Dendritic cell treated with granulocyte-macrophage colony-stimulating factor and Interleukin-4, amounts not matched to agents 40 ng/mL and 50 ng/mL, for 4 days (primary cell): ENCODE measurements at regions of chr4 and their contacts with region 1.

Region 1: DNA sequence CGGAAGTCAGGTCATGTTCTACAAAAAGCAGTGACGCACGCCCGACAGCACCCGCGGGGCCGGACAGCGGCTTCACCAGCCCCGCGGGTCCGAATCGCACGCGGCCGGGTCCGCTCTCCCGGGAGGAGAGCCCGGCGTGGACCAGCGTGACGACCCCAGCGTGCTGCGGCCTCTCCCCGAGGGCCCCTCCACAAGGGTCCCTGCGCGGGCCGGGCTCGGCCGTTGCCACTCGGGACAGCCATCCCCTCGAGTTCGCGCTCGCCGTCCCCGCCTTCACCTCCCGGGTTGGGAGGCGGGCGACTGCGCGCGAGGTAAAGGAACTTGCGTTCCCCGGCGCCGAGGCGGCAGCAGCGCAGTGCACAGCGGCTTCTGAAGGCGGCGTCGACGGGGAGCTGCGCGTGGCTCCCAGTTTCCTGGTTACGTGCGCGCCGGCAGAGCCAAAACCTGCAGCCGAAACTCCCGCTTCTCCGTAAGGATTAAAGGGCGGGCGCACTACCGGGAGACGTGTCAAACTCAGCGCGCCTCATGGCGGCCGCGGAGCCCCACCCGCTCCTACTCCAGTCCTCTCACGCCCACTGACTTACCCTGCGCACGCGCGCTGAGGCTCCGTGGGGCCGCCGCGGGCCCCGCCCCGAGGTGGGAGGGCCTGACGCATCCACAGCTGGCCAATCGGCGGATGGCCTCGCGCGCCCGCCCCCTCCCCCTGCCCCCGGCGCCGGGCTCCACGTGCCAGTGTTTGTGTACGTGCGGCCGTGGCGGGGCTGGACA is 416 bp upstream of the LRP2BP start:
- H3K4me3 Mint-ChIP-seq: peak overlapping the region; percentile 84
- H3K27ac Mint-ChIP-seq: peak overlapping the region; percentile 84
- H3K4me1 Mint-ChIP-seq: peaks cover 23% of the 10 kb centered on the region
- H3K27me3 Mint-ChIP-seq: peaks cover 7% of the 10 kb centered on the region

Region 2: GRCh38 chr4:185425647-185426352 is 29.7 kb after region 1 on chr4 and contains the start of gene UFSP2:
- intact Hi-C with region 1: loop called (anchors 1 kb)
- H3K4me3 Mint-ChIP-seq: peak within 1 kb of the TSS; percentile 79
- H3K27ac Mint-ChIP-seq: peak within 1 kb of the TSS; percentile 94
- H3K4me1 Mint-ChIP-seq: peaks cover 36% of the 10 kb centered on the region
- H3K27me3 Mint-ChIP-seq: peaks cover 28% of the 10 kb centered on the region

Region 3: DNA sequence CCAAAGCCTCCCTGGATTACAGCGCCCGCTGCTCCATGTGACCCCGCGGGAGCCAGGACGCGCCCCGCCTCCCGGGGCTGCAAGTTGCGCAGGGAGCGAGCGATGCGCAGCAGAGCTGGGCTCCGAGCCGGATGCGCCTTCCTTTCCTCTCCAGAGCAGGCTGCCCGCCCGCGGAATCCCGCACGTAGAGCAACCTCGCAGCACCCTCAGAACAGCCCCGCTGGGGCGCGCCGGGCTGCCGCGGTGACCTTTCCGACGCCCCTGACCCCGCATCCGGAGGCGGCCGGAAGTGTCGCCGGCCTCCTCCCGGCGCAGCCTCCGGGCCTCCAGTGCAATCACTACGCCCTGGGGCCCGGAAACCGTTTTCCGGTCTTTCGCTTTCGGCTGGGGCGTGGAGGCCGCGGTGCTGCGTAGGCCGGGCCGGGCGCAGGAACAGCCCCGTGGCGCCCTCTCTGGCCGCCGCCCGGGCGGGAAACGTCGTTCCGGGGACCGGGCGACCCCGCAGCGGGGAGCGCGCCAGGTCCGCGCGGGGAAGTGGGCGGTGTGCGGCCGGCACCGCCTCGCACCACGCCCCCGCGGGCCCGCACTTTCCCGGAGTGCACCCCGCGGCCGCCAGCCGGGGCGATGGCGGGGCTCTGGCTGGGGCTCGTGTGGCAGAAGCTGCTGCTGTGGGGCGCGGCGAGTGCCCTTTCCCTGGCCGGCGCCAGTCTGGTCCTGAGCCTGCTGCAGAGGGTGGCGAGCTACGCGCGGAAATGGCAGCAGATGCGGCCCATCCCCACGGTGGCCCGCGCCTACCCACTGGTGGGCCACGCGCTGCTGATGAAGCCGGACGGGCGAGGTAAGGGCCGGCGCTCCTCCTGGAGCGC is 795.3 kb after region 1 on chr4 and contains the start of gene CYP4V2:
- intact Hi-C with region 1: loop called (anchors 5 kb)
- H3K4me3 Mint-ChIP-seq: peak within 1 kb of the TSS; percentile 97
- H3K27ac Mint-ChIP-seq: peak within 1 kb of the TSS; percentile 96
- H3K4me1 Mint-ChIP-seq: peaks cover 18% of the 10 kb centered on the region
- H3K27me3 Mint-ChIP-seq: no peaks in the 10 kb centered on the region